ENCODE measurements at regions of chr21 and their contacts with region 1.

Region 1: GRCh38 chr21:26170471-26171257 is at the start of gene APP:
- DNase-seq: peak; percentile 69 to 80 (median 76)
- H3K4me3 ChIP-seq: peak within 1 kb of the TSS; percentile 74 to 94 (median 93)
- H3K4me3 Mint-ChIP-seq: peak within 1 kb of the TSS; percentile 96 to 97
- H3K27ac ChIP-seq: peak within 1 kb of the TSS; percentile 59 to 84
- H3K27ac Mint-ChIP-seq: peak within 1 kb of the TSS; percentile 57 to 89 (median 84)
- H3K4me1 ChIP-seq: peaks cover 32 to 45% of the 10 kb centered on the region in 2 donors
- H3K4me1 Mint-ChIP-seq: peaks cover 39% of the 10 kb centered on the region
- H3K27me3 ChIP-seq: peaks cover 0 to 5% of the 10 kb centered on the region in 2 donors
- H3K27me3 Mint-ChIP-seq: peaks cover 3 to 9% (median 5%) of the 10 kb centered on the region in 3 donors
- CTCF ChIP-seq: peak; percentile 99
- polyA plus RNA-seq, gene APP: 28.0 to 118 (median 35.1) TPM

Region 2: GRCh38 chr21:25881525-25882376 is 288.9 kb before region 1 on chr21:
- intact Hi-C with region 1: loop called (anchors 5 kb)
- DNase-seq: peak; percentile 44 to 52 (median 50)
- H3K4me3 ChIP-seq: no peak overlapping the region
- H3K4me3 Mint-ChIP-seq: no peak overlapping the region
- H3K27ac ChIP-seq: no peak overlapping the region
- H3K27ac Mint-ChIP-seq: peak overlapping the region in 1 of 7 donors; percentile 60
- H3K4me1 ChIP-seq: no peaks in the 10 kb centered on the region
- H3K4me1 Mint-ChIP-seq: no peaks in the 10 kb centered on the region
- H3K27me3 ChIP-seq: no peaks in the 10 kb centered on the region
- H3K27me3 Mint-ChIP-seq: no peaks in the 10 kb centered on the region
- CTCF ChIP-seq: peak; percentile 94

Region 3: GRCh38 chr21:25895565-25896205 is 275.0 kb before region 1 on chr21:
- intact Hi-C with region 1: loop called in 1 of 2 experiments (anchors 5 kb)
- DNase-seq: peak; percentile 22 to 71 (median 52)
- H3K4me3 ChIP-seq: no peak overlapping the region
- H3K4me3 Mint-ChIP-seq: no peak overlapping the region
- H3K27ac ChIP-seq: no peak overlapping the region
- H3K27ac Mint-ChIP-seq: no peak overlapping the region
- H3K4me1 ChIP-seq: no peaks in the 10 kb centered on the region
- H3K4me1 Mint-ChIP-seq: no peaks in the 10 kb centered on the region
- H3K27me3 ChIP-seq: no peaks in the 10 kb centered on the region
- H3K27me3 Mint-ChIP-seq: no peaks in the 10 kb centered on the region
- CTCF ChIP-seq: peak; percentile 76

Region 4: GRCh38 chr21:25967573-25968438 is 202.9 kb before region 1 on chr21:
- intact Hi-C with region 1: loop called in 1 of 2 experiments (anchors 5 kb)
- DNase-seq: peak; percentile 79 to 91 (median 87)
- H3K4me3 ChIP-seq: peak overlapping the region in 1 of 3 experiments; percentile 60
- H3K4me3 Mint-ChIP-seq: peak overlapping the region in 1 of 2 donors; percentile 59
- H3K27ac ChIP-seq: peak overlapping the region; percentile 73 to 93
- H3K27ac Mint-ChIP-seq: peak overlapping the region; percentile 80 to 91 (median 86)
- H3K4me1 ChIP-seq: peaks cover 62 to 68% of the 10 kb centered on the region in 2 donors
- H3K4me1 Mint-ChIP-seq: peaks cover 58% of the 10 kb centered on the region
- H3K27me3 ChIP-seq: no peaks in the 10 kb centered on the region
- H3K27me3 Mint-ChIP-seq: no peaks in the 10 kb centered on the region
- CTCF ChIP-seq: no peak

Region 5: GRCh38 chr21:26099610-26100219 is 70.9 kb before region 1 on chr21:
- intact Hi-C with region 1: no loop called
- DNase-seq: no peak
- H3K4me3 ChIP-seq: no peak overlapping the region
- H3K4me3 Mint-ChIP-seq: no peak overlapping the region
- H3K27ac ChIP-seq: no peak overlapping the region
- H3K27ac Mint-ChIP-seq: no peak overlapping the region
- H3K4me1 ChIP-seq: no peaks in the 10 kb centered on the region
- H3K4me1 Mint-ChIP-seq: peaks cover 15% of the 10 kb centered on the region
- H3K27me3 ChIP-seq: no peaks in the 10 kb centered on the region
- H3K27me3 Mint-ChIP-seq: peaks cover 0 to 1% (median 0%) of the 10 kb centered on the region in 3 donors
- CTCF ChIP-seq: no peak

Measured in CD14-positive monocyte (primary cell).